A549 (cell line): ENCODE measurements at regions of chr12 and their contacts with region 1.

Region 1: DNA sequence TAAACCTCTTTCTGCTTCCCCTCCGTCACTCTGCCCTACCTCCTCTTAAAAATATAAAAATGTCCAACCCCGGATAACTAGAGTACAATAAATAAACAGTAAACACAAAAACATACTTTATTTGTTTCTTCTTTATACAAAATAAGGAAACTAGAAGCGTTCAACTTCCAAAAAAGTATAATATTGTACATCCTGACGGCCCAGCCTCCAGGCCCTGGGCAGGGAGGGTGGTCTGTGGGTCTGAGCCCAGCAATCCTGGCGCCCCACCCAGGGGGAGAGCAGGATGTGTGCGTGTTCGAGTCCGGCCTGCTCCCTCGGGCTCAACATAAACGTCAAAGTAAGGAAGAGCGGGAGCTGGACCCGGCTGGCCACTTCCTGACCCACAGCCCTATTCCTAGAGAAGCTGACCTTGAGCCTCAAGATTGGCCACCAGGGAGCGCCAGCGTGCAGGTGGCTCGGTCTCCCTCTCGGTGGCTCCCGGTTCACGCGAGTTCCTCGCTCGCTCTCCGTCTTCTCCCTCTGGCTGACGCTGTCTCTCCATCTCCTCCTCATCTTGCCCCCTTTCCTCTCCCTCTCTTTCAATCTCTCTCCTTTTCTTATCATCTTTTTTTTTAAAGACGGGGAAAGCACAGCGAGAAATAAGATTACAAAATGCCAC is 9.4 kb downstream of the LHX5 start:
- DNase-seq: peak; percentile 76 to 85
- ATAC-seq: peak; percentile 74 to 88
- H3K4me3 ChIP-seq: peak overlapping the region; percentile 32
- H3K27ac ChIP-seq: peak overlapping the region in 1 of 2 experiments; percentile 39; a peak in 2 of 6 replicates
- H3K4me1 ChIP-seq: peaks cover 25% of the 10 kb centered on the region
- CTCF ChIP-seq: peak; percentile 78
- EP300 ChIP-seq: no peak
- POLR2A ChIP-seq: no peak
- RAD21 ChIP-seq: peak; percentile 74 to 75

Region 2: DNA sequence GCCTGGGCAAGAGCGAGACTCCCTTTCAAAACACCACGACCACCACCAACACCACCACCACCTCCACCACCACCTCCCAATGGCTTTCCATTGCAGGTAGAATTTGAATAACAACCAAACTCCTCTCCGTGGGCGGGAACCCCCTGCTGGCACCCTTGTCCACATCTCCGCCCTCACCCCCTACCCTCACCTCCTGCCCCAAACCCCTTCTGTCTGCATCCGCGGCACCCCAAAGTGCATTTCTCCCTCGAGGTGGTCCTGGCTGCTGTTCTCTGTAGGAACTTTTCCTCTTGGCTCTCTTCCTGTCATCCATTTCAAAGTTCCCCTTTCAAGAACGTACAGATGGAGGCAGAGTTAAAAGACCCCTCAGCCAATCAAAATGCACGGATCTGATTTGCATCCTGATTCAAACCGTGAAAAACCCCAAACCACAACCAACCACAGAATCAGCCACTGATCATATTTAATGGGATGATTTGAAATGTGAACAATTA is 36.2 kb before region 1 on chr12:
- CTCF ChIA-PET with region 1: no interaction called
- POLR2A ChIA-PET with region 1: no interaction called
- DNase-seq: no peak
- ATAC-seq: no peak
- H3K4me3 ChIP-seq: no peak overlapping the region
- H3K27ac ChIP-seq: peak overlapping the region in 1 of 2 experiments; percentile 12; a peak in 1 of 6 replicates
- H3K4me1 ChIP-seq: peaks cover 20% of the 10 kb centered on the region
- CTCF ChIP-seq: no peak
- EP300 ChIP-seq: no peak
- POLR2A ChIP-seq: no peak
- RAD21 ChIP-seq: no peak

Region 3: DNA sequence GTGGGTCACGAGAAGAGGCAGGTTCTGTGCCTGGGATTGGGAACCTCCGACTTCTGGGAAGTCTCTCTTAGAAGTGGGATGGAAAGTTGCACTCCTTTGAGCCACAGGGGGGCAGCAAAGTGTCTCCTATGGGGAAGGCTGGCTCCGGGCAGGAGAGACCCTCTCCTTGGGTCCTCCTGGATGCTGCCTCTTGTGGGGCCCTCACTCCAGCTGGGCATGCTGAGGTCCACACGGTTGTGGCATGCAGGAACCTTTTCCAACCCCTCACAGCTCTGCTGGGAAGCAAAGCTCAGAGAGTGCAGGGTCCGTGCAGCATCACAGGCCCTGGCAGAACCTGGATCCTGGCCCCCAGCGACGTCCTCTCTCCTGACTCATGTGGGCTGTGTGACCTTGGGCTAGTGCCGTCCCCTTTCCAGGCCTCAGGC is 22.6 kb before region 1 on chr12:
- CTCF ChIA-PET with region 1: interaction called, 11 read pairs
- POLR2A ChIA-PET with region 1: no interaction called
- DNase-seq: peak; percentile 60 to 74
- ATAC-seq: peak; percentile 75 to 91
- H3K4me3 ChIP-seq: no peak overlapping the region
- H3K27ac ChIP-seq: no peak overlapping the region
- H3K4me1 ChIP-seq: no peaks in the 10 kb centered on the region
- CTCF ChIP-seq: peak; percentile 73
- EP300 ChIP-seq: no peak
- POLR2A ChIP-seq: no peak
- RAD21 ChIP-seq: peak; percentile 70 to 88

Region 4: GRCh38 chr12:113445544-113446171 is 16.6 kb before region 1 on chr12:
- CTCF ChIA-PET with region 1: interaction called, 11 read pairs
- POLR2A ChIA-PET with region 1: no interaction called
- DNase-seq: no peak
- ATAC-seq: peak; percentile 39 to 44; a peak in 2 of 6 replicates
- H3K4me3 ChIP-seq: no peak overlapping the region
- H3K27ac ChIP-seq: no peak overlapping the region
- H3K4me1 ChIP-seq: no peaks in the 10 kb centered on the region
- CTCF ChIP-seq: no peak
- EP300 ChIP-seq: no peak
- POLR2A ChIP-seq: no peak
- RAD21 ChIP-seq: no peak

Region 5: DNA sequence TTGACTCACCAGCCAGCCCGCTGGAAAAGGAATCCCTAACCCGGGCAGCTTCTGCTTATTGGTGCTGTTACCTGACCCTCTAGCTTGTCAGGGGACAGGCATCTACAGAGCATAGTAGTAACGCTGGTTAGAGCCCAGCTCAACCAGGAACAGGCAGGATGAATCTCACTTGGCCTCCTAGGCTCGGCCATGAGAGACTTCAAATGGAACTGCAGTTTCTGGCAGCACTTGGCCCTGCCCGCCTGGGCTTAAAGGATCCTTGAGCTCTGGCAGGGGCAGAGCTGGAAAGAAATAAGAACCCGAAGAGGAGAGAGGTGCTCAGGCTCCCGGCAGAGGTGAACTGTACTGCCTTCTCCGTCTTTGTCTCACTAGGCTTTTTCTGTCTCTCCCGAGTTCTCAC is 11.7 kb after region 1 on chr12:
- CTCF ChIA-PET with region 1: interaction called, 16 read pairs
- POLR2A ChIA-PET with region 1: interaction called, 3 read pairs
- DNase-seq: no peak
- ATAC-seq: peak; percentile 15 to 37; a peak in 4 of 6 replicates
- H3K4me3 ChIP-seq: no peak overlapping the region
- H3K27ac ChIP-seq: no peak overlapping the region
- H3K4me1 ChIP-seq: no peaks in the 10 kb centered on the region
- CTCF ChIP-seq: no peak
- EP300 ChIP-seq: no peak
- POLR2A ChIP-seq: no peak
- RAD21 ChIP-seq: no peak

Region 6: DNA sequence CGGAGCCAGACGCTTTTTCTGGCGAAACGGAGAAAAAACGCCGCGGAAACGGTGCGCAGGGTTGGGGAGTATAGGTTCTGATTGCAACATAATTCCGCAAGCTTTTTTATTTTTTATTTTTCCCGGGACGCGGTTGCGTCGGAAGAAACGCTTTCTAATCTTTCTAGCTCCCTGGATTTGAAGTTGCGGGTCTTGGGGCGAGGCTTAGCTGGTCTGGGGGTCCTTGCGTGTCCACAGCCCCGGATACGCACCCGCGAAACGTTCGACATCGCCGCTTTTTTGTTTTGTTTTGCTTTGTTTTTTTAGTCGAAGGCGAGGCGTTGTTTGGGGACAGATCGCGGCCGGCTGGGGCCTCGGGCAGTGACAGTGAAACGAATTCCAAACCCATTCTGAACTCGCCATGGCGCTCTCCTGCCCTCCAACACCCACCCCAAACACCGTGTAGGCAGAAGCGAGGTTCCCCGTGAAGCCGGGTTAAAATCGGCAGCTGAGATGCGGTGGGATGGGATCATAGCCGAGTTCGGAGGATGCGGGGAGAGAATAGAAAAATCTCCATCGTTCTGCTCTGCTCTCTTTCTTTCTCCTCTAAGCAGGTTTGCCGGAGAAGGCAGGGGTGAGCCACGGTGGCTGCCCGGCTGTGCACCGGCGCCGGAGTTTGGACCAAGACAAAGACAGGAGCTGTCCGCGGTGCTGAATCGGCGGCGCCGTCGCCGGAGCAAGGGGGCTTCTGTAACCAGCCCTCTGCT is 17.5 kb after region 1 on chr12:
- CTCF ChIA-PET with region 1: interaction called, 16 read pairs
- POLR2A ChIA-PET with region 1: interaction called, 3 read pairs
- DNase-seq: no peak
- ATAC-seq: peak in 1 of 2 experiments; percentile 51; a peak in 3 of 6 replicates
- H3K4me3 ChIP-seq: no peak overlapping the region
- H3K27ac ChIP-seq: no peak overlapping the region
- H3K4me1 ChIP-seq: no peaks in the 10 kb centered on the region
- CTCF ChIP-seq: no peak
- EP300 ChIP-seq: no peak
- POLR2A ChIP-seq: no peak
- RAD21 ChIP-seq: no peak

Region 7: DNA sequence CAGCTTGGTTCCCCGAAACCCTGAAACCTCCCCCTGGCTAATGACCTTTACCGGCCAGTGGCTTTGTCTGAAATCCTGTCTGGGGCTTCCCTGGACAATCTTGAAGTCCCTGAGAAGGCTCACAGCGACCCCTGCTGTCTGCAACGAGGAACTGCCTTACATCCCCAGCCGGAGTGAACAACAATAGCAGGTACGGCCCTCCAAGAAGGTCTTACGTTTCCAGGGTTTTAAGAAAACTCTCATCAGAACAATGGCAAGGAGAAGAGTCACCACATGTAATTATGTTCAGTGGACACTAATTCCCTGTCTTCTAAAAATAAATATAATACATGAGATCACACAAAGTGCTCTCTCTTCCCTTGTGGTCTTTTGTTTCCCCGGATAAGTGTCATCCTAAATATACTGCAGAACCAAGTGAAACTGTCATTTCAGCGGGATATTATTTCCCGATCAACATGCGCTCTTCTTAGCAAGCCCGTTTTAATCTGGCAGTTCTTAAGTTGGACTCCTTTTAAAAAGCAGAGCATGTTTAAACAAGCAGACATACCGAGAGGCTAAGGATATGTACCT is 450.6 kb after region 1 on chr12:
- CTCF ChIA-PET with region 1: interaction called, 60 read pairs
- POLR2A ChIA-PET with region 1: no interaction called
- DNase-seq: peak; percentile 79 to 83
- ATAC-seq: peak; percentile 79 to 93
- H3K4me3 ChIP-seq: no peak overlapping the region
- H3K27ac ChIP-seq: no peak overlapping the region
- H3K4me1 ChIP-seq: no peaks in the 10 kb centered on the region
- CTCF ChIP-seq: peak; percentile 94
- EP300 ChIP-seq: no peak
- POLR2A ChIP-seq: no peak
- RAD21 ChIP-seq: peak; percentile 90 to 93